Breast epithelium (tissue), 4 donors: ENCODE measurements at regions of chr10 and their contacts with region 1.

Region 1: GRCh38 chr10:108014902-108015177 is 850.3 kb upstream of the SORCS1 start:
- DNase-seq: no peak
- H3K4me3 ChIP-seq: no peak overlapping the region
- H3K27ac ChIP-seq: no peak overlapping the region
- H3K4me1 ChIP-seq: no peaks in the 10 kb centered on the region
- H3K27me3 ChIP-seq: no peaks in the 10 kb centered on the region
- CTCF ChIP-seq: no peak
- POLR2A ChIP-seq: no peak

Region 2: GRCh38 chr10:107865691-107866090 is 149.1 kb before region 1 on chr10:
- intact Hi-C with region 1: no loop called
- DNase-seq: no peak
- H3K4me3 ChIP-seq: no peak overlapping the region
- H3K27ac ChIP-seq: no peak overlapping the region
- H3K4me1 ChIP-seq: no peaks in the 10 kb centered on the region
- H3K27me3 ChIP-seq: no peaks in the 10 kb centered on the region
- CTCF ChIP-seq: no peak
- POLR2A ChIP-seq: no peak

Region 3: DNA sequence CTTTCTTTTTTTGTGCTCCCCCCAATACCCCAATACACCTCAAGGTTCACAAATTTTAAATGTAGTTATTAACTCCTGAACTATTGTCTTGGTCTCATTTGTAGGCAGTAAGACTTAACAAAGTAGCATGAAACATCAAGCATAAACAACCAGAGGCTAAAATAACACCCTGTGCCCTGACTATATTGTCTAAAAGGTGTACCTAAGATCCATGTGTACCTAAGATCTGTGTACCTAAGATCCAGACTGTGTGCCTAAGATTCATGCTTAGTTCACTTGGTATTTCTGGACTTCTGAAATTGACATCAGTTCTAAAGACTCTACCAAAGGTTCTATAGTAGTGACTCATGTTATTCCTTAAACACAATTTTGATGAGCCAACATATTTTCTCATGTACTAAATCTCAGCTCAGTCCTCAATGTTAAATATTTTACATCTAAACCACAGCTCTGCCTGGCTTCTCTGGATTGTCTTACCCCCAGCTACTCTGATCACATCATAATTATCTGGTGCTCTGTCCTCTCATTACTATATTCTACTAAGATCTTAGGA is 48.1 kb before region 1 on chr10:
- intact Hi-C with region 1: no loop called
- DNase-seq: no peak
- H3K4me3 ChIP-seq: no peak overlapping the region
- H3K27ac ChIP-seq: no peak overlapping the region
- H3K4me1 ChIP-seq: no peaks in the 10 kb centered on the region
- H3K27me3 ChIP-seq: no peaks in the 10 kb centered on the region
- CTCF ChIP-seq: no peak
- POLR2A ChIP-seq: no peak

Region 4: DNA sequence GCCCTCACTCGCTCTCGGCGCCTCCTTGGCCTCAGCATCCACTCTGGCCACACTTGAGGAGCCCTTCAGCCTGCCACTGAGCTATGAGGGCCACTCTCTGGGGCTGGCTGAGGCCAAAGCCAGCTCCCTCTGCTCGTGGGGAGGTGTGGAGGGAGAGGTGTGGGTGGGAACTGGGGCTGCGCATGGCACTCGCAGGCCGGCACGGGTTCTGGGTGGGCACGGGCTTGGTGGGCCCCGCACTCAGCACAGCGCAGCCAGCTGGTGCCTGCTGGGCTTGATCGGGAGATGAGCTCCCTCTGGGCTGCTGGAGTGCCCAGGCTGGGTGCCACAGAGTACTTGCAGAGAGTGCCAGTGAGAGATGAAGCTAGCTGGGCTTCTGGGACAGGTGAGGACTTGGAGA is 1033.0 kb after region 1 on chr10:
- intact Hi-C with region 1: loop called (anchors 5 kb)
- DNase-seq: no peak
- H3K4me3 ChIP-seq: no peak overlapping the region
- H3K27ac ChIP-seq: no peak overlapping the region
- H3K4me1 ChIP-seq: no peaks in the 10 kb centered on the region
- H3K27me3 ChIP-seq: no peaks in the 10 kb centered on the region
- CTCF ChIP-seq: no peak
- POLR2A ChIP-seq: no peak